Dendritic cell treated with granulocyte-macrophage colony-stimulating factor and Interleukin-4, amounts not matched to agents 40 ng/mL and 50 ng/mL, for 4 days (primary cell): ENCODE measurements at regions of chr1 and their contacts with region 1.

Region 1: DNA sequence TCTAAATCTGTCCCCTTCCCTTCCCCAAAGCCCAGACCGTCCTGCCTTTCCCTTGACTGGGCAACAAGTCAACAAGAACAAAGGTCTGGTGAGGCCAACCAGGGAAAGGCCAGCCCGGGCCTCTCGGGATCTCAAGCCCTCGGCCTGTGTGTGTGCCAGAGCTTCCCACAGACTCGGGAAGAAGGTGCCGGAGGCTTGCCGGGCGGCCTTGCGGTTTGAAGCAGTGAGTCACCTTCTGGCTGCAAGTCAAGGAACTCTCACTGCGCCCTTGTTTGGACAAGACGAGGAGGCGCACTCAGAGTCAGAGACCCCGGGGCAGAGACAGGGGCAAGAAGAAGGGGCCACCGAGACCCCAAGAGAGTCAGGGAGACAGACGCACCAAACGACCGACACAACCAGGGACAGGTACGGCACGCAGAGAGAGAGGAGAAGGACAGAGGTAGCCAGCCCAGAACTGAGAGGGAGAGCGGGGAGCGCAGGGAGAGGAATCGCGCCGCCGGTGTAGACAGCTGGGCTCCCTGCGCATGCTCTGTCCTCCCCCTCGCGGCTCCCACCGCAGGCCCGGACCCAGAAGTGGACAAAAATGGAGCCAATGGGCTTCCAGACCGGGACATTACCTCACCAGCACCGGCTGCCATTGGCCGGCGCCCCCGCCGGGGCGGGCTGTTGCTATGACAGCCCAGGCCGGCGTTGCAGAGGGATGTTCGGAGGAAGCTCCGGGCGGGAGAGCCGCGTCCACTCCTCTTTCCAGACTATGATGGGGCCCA is 66.6 kb upstream of the LAPTM5 start:
- H3K4me3 Mint-ChIP-seq: peak overlapping the region; percentile 78
- H3K27ac Mint-ChIP-seq: peak overlapping the region; percentile 84
- H3K4me1 Mint-ChIP-seq: peaks cover 43% of the 10 kb centered on the region
- H3K27me3 Mint-ChIP-seq: peaks cover 76% of the 10 kb centered on the region

Region 2: DNA sequence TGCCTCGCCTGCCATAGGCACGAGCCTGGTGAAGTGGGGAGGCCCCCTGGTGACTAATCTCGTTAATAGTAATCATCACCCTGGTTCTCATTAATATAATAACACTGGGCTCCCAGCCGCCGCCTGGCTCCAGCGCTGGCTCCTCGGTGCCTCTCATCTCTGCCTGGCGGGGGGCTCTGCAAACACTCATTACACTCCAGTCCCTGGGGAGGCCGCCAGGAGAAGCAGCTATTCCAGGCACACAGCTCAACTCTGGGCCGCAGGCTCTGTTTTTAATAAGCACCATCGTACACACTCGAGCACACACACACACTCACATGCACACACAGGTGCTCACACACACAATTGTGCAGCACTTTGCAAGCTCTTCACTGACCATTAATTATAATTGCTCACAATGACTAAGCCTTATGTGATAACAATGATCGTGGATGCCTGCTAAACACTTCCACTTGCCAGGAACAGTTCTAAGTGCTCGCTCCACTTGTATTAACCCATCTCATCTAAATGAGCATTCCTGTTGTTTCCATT is 32.2 kb after region 1 on chr1:
- intact Hi-C with region 1: loop called (anchors 5 kb)
- H3K4me3 Mint-ChIP-seq: no peak overlapping the region
- H3K27ac Mint-ChIP-seq: no peak overlapping the region
- H3K4me1 Mint-ChIP-seq: peaks cover 27% of the 10 kb centered on the region
- H3K27me3 Mint-ChIP-seq: peaks cover 73% of the 10 kb centered on the region